CD14-positive monocyte (primary cell): ENCODE measurements at regions of chr9 and their contacts with region 1.

Region 1: DNA sequence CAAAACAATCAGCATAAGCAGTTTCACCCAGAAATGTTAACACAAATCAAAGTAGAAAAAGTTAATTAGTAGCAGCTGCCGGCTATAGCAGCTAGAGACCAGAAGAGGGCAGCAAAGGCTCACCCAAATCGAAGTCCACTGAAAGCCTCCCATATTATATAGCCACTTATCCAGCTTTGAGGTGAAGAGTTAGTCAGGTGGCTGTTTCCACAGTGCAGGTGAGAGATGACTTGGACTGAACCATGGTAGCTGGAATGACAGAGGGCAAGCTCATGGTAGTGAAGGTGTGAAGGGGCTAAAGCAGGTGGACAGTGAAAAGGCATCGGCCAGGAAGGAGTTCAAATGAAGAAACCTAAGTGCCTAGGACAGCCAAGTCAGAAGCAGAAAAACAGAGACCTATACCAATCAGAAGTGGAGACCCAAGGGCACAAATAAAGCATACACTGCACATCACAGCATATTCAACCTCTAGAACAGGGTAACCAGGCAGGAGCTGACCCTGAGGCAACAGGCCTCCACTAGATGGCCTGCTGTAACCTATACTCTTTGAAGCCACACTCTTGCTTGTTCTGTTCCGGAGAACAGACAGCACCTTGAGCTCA is 7.2 kb upstream of the RNF38 start:
- DNase-seq: peak; percentile 46 to 67 (median 65)
- H3K4me3 ChIP-seq: no peak overlapping the region
- H3K4me3 Mint-ChIP-seq: no peak overlapping the region
- H3K27ac ChIP-seq: peak overlapping the region in 1 of 2 donors; percentile 44
- H3K27ac Mint-ChIP-seq: peak overlapping the region in 5 of 7 donors; percentile 19 to 82 (median 60)
- H3K4me1 ChIP-seq: no peaks in the 10 kb centered on the region
- H3K4me1 Mint-ChIP-seq: peaks cover 1% of the 10 kb centered on the region
- H3K27me3 ChIP-seq: no peaks in the 10 kb centered on the region
- H3K27me3 Mint-ChIP-seq: peaks cover 0 to 2% (median 0%) of the 10 kb centered on the region in 3 donors
- CTCF ChIP-seq: peak; percentile 92

Region 2: GRCh38 chr9:36560857-36561221 is 153.6 kb after region 1 on chr9:
- intact Hi-C with region 1: loop called (anchors 2 kb)
- DNase-seq: no peak
- H3K4me3 ChIP-seq: no peak overlapping the region
- H3K4me3 Mint-ChIP-seq: no peak overlapping the region
- H3K27ac ChIP-seq: no peak overlapping the region
- H3K27ac Mint-ChIP-seq: no peak overlapping the region
- H3K4me1 ChIP-seq: peaks cover 0 to 5% of the 10 kb centered on the region in 2 donors
- H3K4me1 Mint-ChIP-seq: peaks cover 4% of the 10 kb centered on the region
- H3K27me3 ChIP-seq: no peaks in the 10 kb centered on the region
- H3K27me3 Mint-ChIP-seq: peaks cover 1 to 6% (median 4%) of the 10 kb centered on the region in 3 donors
- CTCF ChIP-seq: no peak

Region 3: GRCh38 chr9:36728651-36729520 is 321.7 kb after region 1 on chr9:
- intact Hi-C with region 1: loop called in 1 of 2 experiments (anchors 5 kb)
- DNase-seq: peak; percentile 19 to 70 (median 41)
- H3K4me3 ChIP-seq: no peak overlapping the region
- H3K4me3 Mint-ChIP-seq: no peak overlapping the region
- H3K27ac ChIP-seq: no peak overlapping the region
- H3K27ac Mint-ChIP-seq: no peak overlapping the region
- H3K4me1 ChIP-seq: peaks cover 5 to 7% of the 10 kb centered on the region in 2 donors
- H3K4me1 Mint-ChIP-seq: peaks cover 7% of the 10 kb centered on the region
- H3K27me3 ChIP-seq: no peaks in the 10 kb centered on the region
- H3K27me3 Mint-ChIP-seq: peaks cover 0 to 2% (median 0%) of the 10 kb centered on the region in 3 donors
- CTCF ChIP-seq: peak; percentile 82